A673 (cell line): ENCODE measurements at regions of chrX and their contacts with region 1.

Region 1: DNA sequence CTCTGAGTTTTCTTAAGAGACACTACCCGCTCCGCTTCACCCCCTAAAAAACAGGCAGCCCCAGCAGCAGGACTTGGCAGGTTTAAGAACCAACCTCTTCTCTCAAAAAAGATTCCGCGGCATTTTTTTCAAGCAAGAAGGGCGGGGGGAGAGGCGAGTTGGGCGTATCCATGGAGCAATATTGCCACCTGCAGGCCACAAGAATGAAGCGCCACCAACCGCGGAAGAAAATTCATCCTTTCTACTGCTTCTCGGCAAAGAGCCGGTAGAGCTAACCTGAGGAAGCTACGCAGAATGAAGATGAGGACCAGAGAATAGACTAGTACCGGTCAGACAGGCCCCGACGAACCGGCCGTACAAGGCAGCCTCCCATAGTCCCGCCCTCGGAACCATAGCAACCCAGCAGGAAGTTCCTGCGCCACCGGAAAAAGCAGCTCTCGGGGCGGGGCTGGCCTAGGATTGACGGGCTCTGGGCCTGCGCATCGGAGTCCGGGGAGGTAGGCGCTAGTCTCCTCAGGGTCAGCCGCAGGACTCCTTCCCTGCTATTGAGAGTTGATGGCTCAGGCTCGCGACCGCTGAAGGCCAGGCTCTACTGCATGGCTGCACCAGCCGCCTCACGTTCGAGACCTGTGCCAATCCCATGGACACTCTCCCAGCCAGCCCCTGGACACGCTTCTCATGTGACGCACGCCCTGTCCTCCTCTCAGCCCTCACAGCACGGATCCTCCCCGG is 76.9 kb downstream of the MAGED4 start:
- DNase-seq: peak; percentile 96
- H3K4me3 ChIP-seq: peak overlapping the region; percentile 61
- H3K27ac ChIP-seq: peak overlapping the region; percentile 90
- H3K4me1 ChIP-seq: peaks cover 28% of the 10 kb centered on the region
- H3K27me3 ChIP-seq: no peaks in the 10 kb centered on the region
- CTCF ChIP-seq: peak; percentile 99

Region 2: DNA sequence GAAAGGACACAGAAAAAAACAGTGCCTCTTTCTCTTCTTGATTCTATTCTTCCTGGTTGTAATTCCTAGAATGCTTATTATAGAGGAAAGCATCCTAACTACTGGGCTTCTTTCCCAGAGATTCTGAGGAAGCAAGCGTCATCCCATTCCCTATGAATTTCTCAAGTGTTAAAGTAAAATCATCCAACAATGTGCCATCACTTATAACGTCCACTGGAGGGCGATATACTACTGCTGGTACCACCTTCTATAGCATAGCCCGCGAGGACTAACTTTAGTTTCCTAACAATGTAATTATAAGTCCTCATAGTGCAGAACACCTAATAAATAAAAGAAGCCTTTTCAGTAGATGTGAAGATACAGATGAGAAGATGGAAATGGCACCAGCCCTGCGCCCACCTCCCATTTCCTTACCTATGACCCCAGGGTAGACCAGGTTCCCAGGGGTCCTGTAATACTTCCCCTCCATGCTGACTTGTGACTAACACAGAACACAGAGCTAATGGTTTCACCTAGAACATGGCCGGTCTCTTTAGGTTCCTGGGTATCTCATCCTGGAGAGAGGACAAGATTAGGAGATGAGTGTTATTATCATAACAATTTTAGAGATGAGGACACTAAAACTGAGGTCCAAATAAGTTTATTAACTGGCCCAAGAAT is 647.1 kb before region 1 on chrX:
- CTCF ChIA-PET with region 1: interaction called, 4 read pairs
- POLR2A ChIA-PET with region 1: no interaction called
- intact Hi-C with region 1: loop called (anchors 10 kb)
- DNase-seq: peak; percentile 78
- H3K4me3 ChIP-seq: no peak overlapping the region
- H3K27ac ChIP-seq: no peak overlapping the region
- H3K4me1 ChIP-seq: no peaks in the 10 kb centered on the region
- H3K27me3 ChIP-seq: no peaks in the 10 kb centered on the region
- CTCF ChIP-seq: peak; percentile 83

Region 3: GRCh38 chrX:51641421-51642021 is 620.1 kb before region 1 on chrX:
- CTCF ChIA-PET with region 1: interaction called, 6 read pairs
- POLR2A ChIA-PET with region 1: no interaction called
- intact Hi-C with region 1: loop called (anchors 2 kb)
- DNase-seq: peak; percentile 81
- H3K4me3 ChIP-seq: no peak overlapping the region
- H3K27ac ChIP-seq: no peak overlapping the region
- H3K4me1 ChIP-seq: no peaks in the 10 kb centered on the region
- H3K27me3 ChIP-seq: no peaks in the 10 kb centered on the region
- CTCF ChIP-seq: peak; percentile 77

Region 4: DNA sequence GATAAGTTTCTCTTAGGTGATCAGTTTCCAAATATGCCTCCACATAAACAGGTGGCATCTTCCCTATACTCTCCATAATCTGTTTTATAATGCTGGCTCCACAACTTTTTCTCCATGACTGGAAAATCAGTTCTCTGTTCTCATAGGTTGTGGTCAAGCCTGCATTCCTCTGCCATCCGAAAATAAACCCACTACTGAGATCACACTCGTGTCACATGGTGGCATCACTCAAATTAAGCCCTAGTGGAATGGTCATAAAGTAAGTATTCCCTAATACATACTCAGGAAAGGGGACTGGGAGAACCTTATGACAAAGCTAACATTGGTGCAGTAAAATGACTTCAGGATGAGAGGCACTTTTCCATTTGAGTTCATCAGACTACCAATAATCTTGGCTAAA is 230.3 kb before region 1 on chrX:
- CTCF ChIA-PET with region 1: no interaction called
- POLR2A ChIA-PET with region 1: no interaction called
- intact Hi-C with region 1: no loop called
- DNase-seq: no peak
- H3K4me3 ChIP-seq: no peak overlapping the region
- H3K27ac ChIP-seq: no peak overlapping the region
- H3K4me1 ChIP-seq: no peaks in the 10 kb centered on the region
- H3K27me3 ChIP-seq: no peaks in the 10 kb centered on the region
- CTCF ChIP-seq: no peak